ENCODE measurements at regions of chr6 and their contacts with region 1.

Region 1: GRCh38 chr6:166907373-166907841 is 48.9 kb downstream of the RNASET2 start:
- DNase-seq: peak in 1 of 10 donors; percentile 64

Region 2: GRCh38 chr6:166862287-166862977 is 45.0 kb before region 1 on chr6:
- intact Hi-C with region 1: loop called (anchors 5 kb)
- DNase-seq: peak in 7 of 10 donors; percentile 42 to 93 (median 58)

Region 3: DNA sequence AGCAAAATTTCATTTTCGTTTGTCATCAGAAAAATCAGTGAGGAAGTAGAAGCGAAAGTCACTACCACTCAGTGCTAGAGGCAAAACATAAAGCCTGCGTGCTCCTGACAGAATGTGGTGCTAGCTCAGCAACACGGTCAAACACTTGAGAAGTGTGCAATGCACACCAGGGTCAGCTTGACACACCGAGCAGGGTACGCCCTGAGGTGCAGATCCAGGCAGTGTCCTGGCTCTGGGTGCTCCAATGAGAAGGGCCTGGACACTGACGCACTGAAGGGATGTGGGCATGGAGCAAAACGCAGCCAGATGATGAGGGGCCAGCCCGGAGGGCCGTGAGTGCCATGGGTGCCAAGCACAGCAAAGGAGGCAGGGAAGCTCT is 43.0 kb after region 1 on chr6:
- intact Hi-C with region 1: loop called (anchors 5 kb)
- DNase-seq: peak in 2 of 10 donors; percentile 16 to 58